ENCODE measurements at regions of chr5 and their contacts with region 1.

Region 1: GRCh38 chr5:142699184-142699720 is 13.4 kb upstream of the FGF1 start:
- DNase-seq: peak; percentile 83 to 96 (median 88)
- H3K4me3 ChIP-seq: peak overlapping the region in 3 of 59 donors; percentile 8 to 36 (median 20)
- H3K27ac ChIP-seq: peak overlapping the region in 57 of 59 donors; percentile 10 to 89 (median 76)
- H3K27me3 ChIP-seq: no peaks in the 10 kb centered on the region
- CTCF ChIP-seq: peak; percentile 94 to 99 (median 98)

Region 2: DNA sequence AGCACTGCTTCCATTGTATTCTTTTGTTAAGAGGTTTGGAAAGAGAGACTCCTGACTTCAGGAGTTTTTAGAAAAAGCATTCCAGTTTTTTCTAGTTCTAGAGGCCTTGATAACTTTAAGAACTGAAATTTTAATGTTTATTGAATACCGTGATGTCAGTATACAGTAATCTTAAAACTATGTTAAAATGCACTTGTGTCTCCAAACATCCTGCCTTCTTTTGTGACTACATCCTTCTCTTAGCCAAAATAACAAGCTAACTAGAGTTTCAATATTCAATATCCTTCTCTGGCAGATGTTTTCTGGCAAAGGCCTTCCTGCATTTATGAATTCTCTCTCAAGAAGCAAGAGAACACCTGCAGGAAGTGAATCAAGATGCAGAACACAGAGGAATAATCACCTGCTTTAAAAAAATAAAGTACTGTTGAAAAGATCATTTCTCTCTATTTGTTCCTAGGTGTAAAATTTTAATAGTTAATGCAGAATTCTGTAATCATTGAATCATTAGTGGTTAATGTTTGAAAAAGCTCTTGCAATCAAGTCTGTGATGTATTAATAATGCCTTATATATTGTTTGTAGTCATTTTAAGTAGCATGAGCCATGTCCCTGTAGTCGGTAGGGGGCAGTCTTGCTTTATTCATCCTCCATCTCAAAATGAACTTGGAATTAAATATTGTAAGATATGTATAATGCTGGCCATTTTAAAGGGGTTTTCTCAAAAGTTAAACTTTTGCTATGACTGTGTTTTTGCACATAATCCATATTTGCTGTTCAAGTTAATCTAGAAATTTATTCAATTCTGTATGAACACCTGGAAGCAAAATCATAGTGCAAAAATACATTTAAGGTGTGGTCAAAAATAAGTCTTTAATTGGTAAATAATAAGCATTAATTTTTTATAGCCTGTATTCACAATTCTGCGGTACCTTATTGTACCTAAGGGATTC is 547.5 kb before region 1 on chr5:
- intact Hi-C with region 1: loop called in 1 of 2 experiments (anchors 5 kb)
- DNase-seq: peak in 4 of 10 donors; percentile 20 to 67 (median 42)
- H3K4me3 ChIP-seq: no peak overlapping the region
- H3K27ac ChIP-seq: no peak overlapping the region
- H3K27me3 ChIP-seq: no peaks in the 10 kb centered on the region
- CTCF ChIP-seq: peak; percentile 68 to 96 (median 82)

Region 3: GRCh38 chr5:142611154-142611553 is 88.1 kb before region 1 on chr5:
- intact Hi-C with region 1: loop called (anchors 2 to 5 kb)
- DNase-seq: peak; percentile 53 to 87 (median 75)
- H3K4me3 ChIP-seq: no peak overlapping the region
- H3K27ac ChIP-seq: peak overlapping the region in 16 of 59 donors; percentile 5 to 67 (median 39)
- H3K27me3 ChIP-seq: no peaks in the 10 kb centered on the region
- CTCF ChIP-seq: peak; percentile 65 to 92 (median 85)

Region 4: GRCh38 chr5:142655339-142656267 is 43.6 kb before region 1 on chr5:
- intact Hi-C with region 1: loop called (anchors 1 kb)
- DNase-seq: peak; percentile 83 to 94 (median 92)
- H3K4me3 ChIP-seq: peak overlapping the region in 8 of 59 donors; percentile 3 to 37 (median 10)
- H3K27ac ChIP-seq: peak overlapping the region; percentile 4 to 93 (median 83)
- H3K27me3 ChIP-seq: no peaks in the 10 kb centered on the region
- CTCF ChIP-seq: peak in 55 of 56 donors; percentile 81 to 100 (median 99)

Region 5: DNA sequence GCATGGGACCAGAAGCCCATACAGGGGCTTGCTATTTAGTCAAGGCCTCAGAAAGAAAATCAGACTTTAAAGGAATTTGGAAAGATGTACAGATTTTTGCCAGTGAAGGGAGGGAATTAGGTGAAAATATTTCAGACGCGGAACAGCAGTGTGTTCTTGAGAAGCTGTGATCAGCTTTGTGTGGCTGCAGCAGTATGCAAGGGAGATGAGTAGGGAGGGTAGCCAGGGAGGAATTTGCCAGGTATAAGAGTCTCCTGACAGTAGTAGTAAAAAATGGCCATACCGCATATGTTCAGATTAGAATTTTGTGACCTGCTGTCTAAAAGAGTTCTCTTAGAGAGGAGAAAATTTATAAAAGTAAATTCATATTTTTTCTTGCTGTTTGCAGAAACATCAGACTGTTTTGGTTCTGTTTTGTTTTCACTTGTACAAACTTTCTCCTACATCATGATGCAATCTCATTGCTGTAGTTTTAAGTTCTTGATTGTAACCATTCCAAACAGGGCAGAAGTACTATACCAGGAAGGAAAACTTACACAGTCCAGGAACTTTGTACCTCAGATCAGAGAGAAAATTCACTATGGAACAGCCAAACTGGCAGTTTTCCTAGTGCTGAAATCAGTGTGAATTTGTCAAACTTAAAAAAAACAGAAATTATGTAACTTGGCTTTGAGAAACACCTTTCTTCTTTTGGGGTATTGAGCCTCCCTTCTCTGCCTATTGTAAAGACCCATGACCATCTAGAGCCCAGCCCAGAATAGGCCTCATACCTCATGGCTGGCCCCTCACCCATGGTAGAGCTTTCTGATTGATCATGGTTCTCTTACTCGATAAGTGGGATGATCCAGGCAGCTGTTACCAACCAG is 782.6 kb after region 1 on chr5:
- intact Hi-C with region 1: no loop called
- DNase-seq: no peak
- H3K4me3 ChIP-seq: no peak overlapping the region
- H3K27ac ChIP-seq: no peak overlapping the region
- H3K27me3 ChIP-seq: no peaks in the 10 kb centered on the region
- CTCF ChIP-seq: no peak